Heart left ventricle (tissue), 16 donors: ENCODE measurements at regions of chr10 and their contacts with region 1.

Region 1: DNA sequence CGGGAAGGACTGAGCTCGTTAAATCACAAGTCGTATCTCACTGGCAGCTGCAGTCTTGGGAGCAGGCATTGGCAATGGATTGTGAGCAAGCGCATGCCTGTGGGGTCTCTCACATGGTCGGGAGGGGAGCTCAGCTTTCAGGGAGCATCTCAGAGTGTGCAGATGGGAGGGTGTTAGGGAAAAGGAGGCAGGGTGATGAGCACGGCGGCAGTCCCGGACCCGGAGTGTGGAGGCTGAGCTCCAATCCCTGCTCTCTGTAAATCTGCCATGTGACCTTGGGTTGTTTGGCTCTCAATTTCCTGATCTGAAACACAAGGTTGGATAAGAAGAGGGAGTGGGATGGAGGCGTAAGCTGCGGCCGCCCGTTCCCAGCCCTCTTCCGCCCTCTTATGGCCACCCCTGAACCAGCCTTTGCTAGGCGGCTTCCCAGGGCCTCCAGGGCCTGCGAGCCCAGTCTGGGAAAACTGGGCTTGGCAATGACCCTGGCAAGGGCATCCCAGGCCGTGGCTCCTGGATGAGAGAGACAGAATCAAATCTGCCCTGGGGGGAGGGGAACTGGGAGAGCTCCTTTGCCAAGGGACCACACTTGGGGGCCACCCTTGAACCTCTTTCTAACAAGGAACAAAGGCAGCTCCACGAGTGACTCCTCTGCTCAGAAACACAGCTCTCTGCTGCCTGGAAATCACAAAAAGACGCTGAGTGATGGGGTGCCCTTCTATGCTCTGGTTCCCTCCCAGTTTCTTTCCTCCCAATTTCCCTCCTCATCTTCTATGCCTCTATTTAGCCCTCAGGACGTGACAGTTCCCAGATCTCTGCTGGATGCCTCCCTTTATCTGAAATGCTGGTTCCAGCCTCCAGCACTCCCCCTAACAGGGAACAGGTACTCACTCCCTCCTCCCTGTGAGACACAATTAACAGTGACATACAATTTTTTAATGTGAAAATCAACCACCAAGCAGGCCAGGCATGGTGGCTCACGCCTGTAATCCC is 41.7 kb upstream of the LOXL4 start:
- DNase-seq: peak; percentile 67 to 88 (median 73)
- ATAC-seq: peak; percentile 82 to 98 (median 95)
- H3K4me3 ChIP-seq: peak overlapping the region in 4 of 12 donors; percentile 3 to 25 (median 18)
- H3K27ac ChIP-seq: peak overlapping the region in 1 of 12 donors; percentile 10
- H3K4me1 ChIP-seq: peaks cover 0 to 16% (median 8%) of the 10 kb centered on the region in 12 donors
- H3K27me3 ChIP-seq: peaks cover 0 to 13% (median 0%) of the 10 kb centered on the region in 9 donors
- CTCF ChIP-seq: peak; percentile 66 to 94 (median 82)
- POLR2A ChIP-seq: no peak

Region 2: GRCh38 chr10:97914837-97915211 is 394.8 kb before region 1 on chr10:
- intact Hi-C with region 1: loop called in 3 of 10 experiments (anchors 5 kb)
- DNase-seq: peak; percentile 66 to 87 (median 74)
- ATAC-seq: peak; percentile 79 to 90 (median 83)
- H3K4me3 ChIP-seq: no peak overlapping the region
- H3K27ac ChIP-seq: no peak overlapping the region
- H3K4me1 ChIP-seq: peaks cover 0 to 21% (median 6%) of the 10 kb centered on the region in 12 donors
- H3K27me3 ChIP-seq: no peaks in the 10 kb centered on the region
- CTCF ChIP-seq: peak; percentile 82 to 94 (median 88)
- POLR2A ChIP-seq: no peak

Region 3: DNA sequence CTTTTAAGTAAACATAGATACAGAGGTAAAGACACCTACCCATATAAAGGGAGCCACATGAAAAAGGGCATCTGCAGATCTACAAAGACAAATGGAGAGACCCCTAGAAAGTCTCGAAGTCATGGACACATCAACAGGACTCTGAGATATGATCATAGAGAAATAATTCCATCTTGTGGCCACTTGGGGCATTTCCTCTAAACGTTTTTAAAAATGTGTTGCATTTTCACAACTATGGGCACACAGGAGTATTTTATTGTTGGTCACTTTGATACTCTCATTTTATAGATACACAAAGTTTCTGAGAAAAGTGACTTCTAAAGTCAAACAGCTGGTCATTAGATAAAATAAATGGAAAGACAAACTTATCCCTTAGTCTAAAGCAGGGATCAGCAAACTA is 366.4 kb before region 1 on chr10:
- intact Hi-C with region 1: no loop called
- DNase-seq: no peak
- ATAC-seq: no peak
- H3K4me3 ChIP-seq: no peak overlapping the region
- H3K27ac ChIP-seq: no peak overlapping the region
- H3K4me1 ChIP-seq: peaks cover 0 to 3% (median 0%) of the 10 kb centered on the region in 12 donors
- H3K27me3 ChIP-seq: peaks cover 0 to 13% (median 0%) of the 10 kb centered on the region in 9 donors
- CTCF ChIP-seq: no peak
- POLR2A ChIP-seq: no peak

Region 4: GRCh38 chr10:98170249-98171117 is 139.2 kb before region 1 on chr10:
- intact Hi-C with region 1: loop called (anchors 1 to 10 kb)
- DNase-seq: peak in 2 of 5 donors; percentile 20 to 22
- ATAC-seq: peak in 2 of 4 donors; percentile 55 to 68
- H3K4me3 ChIP-seq: no peak overlapping the region
- H3K27ac ChIP-seq: no peak overlapping the region
- H3K4me1 ChIP-seq: peaks cover 0 to 23% (median 8%) of the 10 kb centered on the region in 12 donors
- H3K27me3 ChIP-seq: no peaks in the 10 kb centered on the region
- CTCF ChIP-seq: peak; percentile 62 to 83 (median 72)
- POLR2A ChIP-seq: no peak

Region 5: DNA sequence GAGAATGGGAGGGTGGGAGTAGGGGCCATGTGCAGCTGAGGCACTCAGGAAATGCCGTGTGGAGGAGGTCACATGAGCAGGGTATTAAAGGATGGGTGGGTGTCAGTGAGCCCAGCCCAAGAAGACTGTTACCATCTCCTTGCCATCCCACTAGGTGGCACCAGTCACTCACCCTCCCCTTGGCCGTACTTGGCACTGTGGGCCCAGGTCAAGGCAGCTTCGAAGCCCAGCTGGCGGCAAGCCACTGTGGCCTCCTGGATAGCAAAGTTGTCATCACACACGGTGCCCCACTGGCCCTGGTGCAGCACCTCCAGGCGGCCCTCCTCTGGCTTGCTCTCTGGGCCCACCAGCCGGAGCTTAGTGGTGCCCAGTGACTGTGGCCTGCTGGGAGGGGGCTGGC is 47.1 kb before region 1 on chr10:
- intact Hi-C with region 1: loop called in 6 of 10 experiments (anchors 1 to 5 kb)
- DNase-seq: peak; percentile 61 to 87 (median 78)
- ATAC-seq: peak; percentile 40 to 83 (median 76)
- H3K4me3 ChIP-seq: no peak overlapping the region
- H3K27ac ChIP-seq: no peak overlapping the region
- H3K4me1 ChIP-seq: peaks cover 0 to 8% (median under 1%) of the 10 kb centered on the region in 12 donors
- H3K27me3 ChIP-seq: peaks cover 0 to 3% (median 0%) of the 10 kb centered on the region in 9 donors
- CTCF ChIP-seq: peak; percentile 31 to 66 (median 57)
- POLR2A ChIP-seq: no peak

Region 6: GRCh38 chr10:99248824-99249223 is 939.2 kb after region 1 on chr10:
- intact Hi-C with region 1: loop called in 1 of 10 experiments (anchors 5 kb)
- DNase-seq: no peak
- ATAC-seq: no peak
- H3K4me3 ChIP-seq: no peak overlapping the region
- H3K27ac ChIP-seq: no peak overlapping the region
- H3K4me1 ChIP-seq: no peaks in the 10 kb centered on the region
- H3K27me3 ChIP-seq: peaks cover 0 to 7% (median 0%) of the 10 kb centered on the region in 9 donors
- CTCF ChIP-seq: no peak
- POLR2A ChIP-seq: no peak